ENCODE measurements at regions of chr2 and their contacts with region 1.

Region 1: GRCh38 chr2:131034122-131035051 is 58.9 kb downstream of the FAM168B start:
- DNase-seq: peak in 9 of 10 donors; percentile 64 to 95 (median 74)

Region 2: GRCh38 chr2:130966775-130967490 is 67.5 kb before region 1 on chr2:
- intact Hi-C with region 1: loop called (anchors 5 kb)
- DNase-seq: no peak

Region 3: DNA sequence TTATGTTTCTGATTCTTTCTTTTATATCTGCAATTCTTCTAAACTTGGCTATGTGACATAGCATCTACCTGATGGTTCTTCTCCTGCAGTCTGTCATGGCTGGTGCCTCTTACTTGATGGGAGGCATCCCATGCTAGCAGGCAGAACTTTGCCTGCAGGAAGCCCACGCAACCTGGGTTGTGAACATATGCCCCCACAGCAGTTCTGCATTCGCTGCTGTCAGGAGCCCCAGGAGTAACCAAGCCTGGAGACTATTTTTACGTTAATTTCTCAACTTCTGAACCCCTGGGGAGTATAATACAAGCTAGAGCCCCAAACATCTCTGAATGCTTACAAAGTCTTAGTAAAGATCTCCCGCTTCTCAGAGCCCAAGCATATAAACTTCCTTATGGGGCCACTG is 46.8 kb after region 1 on chr2:
- intact Hi-C with region 1: no loop called
- DNase-seq: no peak

Region 4: GRCh38 chr2:131093006-131093695 is 58.8 kb after region 1 on chr2 and contains the start of gene FAM168B:
- intact Hi-C with region 1: loop called (anchors 2 kb)
- DNase-seq: peak; percentile 72 to 97 (median 79)

Region 5: GRCh38 chr2:131105156-131105949 is 71.0 kb after region 1 on chr2 and contains the start of gene PLEKHB2:
- intact Hi-C with region 1: loop called (anchors 5 kb)
- DNase-seq: peak; percentile 88 to 99 (median 93)

Region 6: GRCh38 chr2:131148426-131148825 is 114.0 kb after region 1 on chr2:
- intact Hi-C with region 1: loop called (anchors 2 kb)
- DNase-seq: peak in 1 of 10 donors; percentile 79